ENCODE measurements at regions of chr6 and their contacts with region 1.

Region 1: GRCh38 chr6:153032255-153032882 is 29.9 kb upstream of the MTRF1L start:
- DNase-seq: no peak
- ATAC-seq: peak; percentile 52
- H3K4me3 ChIP-seq: no peak overlapping the region
- H3K27ac ChIP-seq: no peak overlapping the region
- H3K4me1 ChIP-seq: no peaks in the 10 kb centered on the region
- H3K27me3 ChIP-seq: no peaks in the 10 kb centered on the region

Region 2: GRCh38 chr6:152846825-152847224 is 185.5 kb before region 1 on chr6:
- intact Hi-C with region 1: no loop called
- DNase-seq: no peak
- ATAC-seq: no peak
- H3K4me3 ChIP-seq: no peak overlapping the region
- H3K27ac ChIP-seq: no peak overlapping the region
- H3K4me1 ChIP-seq: no peaks in the 10 kb centered on the region
- H3K27me3 ChIP-seq: no peaks in the 10 kb centered on the region

Region 3: DNA sequence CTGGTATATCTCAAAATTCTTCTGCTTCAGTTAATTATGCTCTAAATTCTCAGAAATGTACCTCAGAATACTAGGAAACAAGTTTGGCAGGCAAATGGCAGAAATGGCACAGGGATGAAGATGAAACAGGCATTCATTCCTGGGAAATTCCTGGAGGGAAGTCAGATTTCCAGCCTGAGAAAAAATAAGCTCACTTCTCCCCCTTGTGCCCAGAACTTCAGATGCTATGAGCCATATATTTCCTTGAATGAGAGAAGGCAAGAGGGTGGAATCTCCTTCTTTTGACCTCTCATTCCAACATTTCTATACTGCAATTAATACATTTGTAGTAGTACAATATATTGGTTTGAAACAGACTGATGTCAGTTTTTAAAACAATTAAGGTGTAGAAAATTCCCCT is 75.9 kb after region 1 on chr6:
- intact Hi-C with region 1: loop called in 1 of 2 experiments (anchors 1 kb)
- DNase-seq: no peak
- ATAC-seq: no peak
- H3K4me3 ChIP-seq: no peak overlapping the region
- H3K27ac ChIP-seq: no peak overlapping the region
- H3K4me1 ChIP-seq: peaks cover 0 to 14% of the 10 kb centered on the region in 2 donors
- H3K27me3 ChIP-seq: no peaks in the 10 kb centered on the region

Region 4: GRCh38 chr6:153328169-153328568 is 295.8 kb after region 1 on chr6:
- intact Hi-C with region 1: no loop called
- DNase-seq: no peak
- ATAC-seq: no peak
- H3K4me3 ChIP-seq: no peak overlapping the region
- H3K27ac ChIP-seq: no peak overlapping the region
- H3K4me1 ChIP-seq: no peaks in the 10 kb centered on the region
- H3K27me3 ChIP-seq: no peaks in the 10 kb centered on the region

Region 5: DNA sequence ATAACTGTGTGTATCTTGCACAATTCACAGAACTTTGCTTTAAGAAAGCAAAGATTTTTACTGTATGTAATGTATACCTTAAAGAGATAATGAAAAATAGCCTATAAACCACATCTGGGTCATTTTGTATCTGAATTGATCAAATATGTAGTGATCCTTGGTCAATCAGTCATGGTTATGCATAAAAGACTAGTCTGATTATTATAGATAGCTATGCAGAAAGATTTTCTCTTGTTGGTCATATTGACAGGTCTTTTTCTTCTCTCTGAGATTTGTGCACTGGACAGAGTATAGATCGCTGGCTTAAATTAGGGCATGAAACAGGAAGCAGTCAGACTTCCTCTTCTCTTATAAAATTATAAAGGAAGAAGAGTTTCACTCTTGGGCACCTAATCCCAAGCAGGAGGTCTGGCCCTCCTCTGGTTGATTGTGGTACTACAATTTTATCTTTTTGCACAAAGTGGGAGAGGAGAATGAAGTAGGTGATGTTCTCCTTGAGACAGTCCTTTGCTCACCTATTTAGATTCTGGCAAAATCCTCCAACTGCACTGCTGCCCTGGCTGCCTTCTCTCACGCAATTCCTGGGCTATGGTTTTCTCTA is 479.6 kb after region 1 on chr6:
- intact Hi-C with region 1: loop called in 1 of 2 experiments (anchors 5 kb)
- DNase-seq: no peak
- ATAC-seq: no peak
- H3K4me3 ChIP-seq: no peak overlapping the region
- H3K27ac ChIP-seq: no peak overlapping the region
- H3K4me1 ChIP-seq: no peaks in the 10 kb centered on the region
- H3K27me3 ChIP-seq: no peaks in the 10 kb centered on the region

Region 6: DNA sequence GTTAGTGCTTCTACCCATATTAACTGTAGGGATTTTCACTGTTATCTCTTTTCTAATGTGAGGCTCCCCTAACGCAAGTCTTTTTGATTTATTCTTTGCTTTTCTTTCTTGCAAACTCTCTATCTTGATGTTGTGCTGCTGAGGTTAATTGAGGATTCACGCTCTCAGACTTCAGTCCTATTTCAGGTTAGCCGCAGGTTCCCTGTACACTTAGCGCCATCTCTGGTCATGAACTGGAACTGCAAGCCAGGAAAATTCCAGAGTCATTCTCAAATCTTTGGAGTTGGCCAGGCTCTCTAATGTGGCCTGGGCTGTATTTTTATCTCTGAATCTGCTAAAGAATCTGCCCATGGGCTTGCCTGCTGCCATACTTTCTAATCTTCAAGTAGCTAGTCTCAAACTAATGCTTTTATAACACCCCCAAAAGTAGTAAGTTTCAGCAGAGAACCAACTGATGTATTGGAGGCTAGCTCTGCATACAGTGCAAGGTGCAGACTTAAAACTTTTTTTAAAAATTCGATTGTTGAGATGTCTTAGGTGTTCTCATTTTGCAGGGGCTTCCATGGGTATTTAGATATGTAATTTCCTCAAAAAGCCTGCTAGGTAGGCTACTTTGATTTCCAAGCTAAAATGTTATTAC is 915.6 kb after region 1 on chr6:
- intact Hi-C with region 1: loop called (anchors 10 kb)
- DNase-seq: no peak
- ATAC-seq: peak; percentile 76
- H3K4me3 ChIP-seq: peak overlapping the region in 1 of 2 donors; percentile 54
- H3K27ac ChIP-seq: no peak overlapping the region
- H3K4me1 ChIP-seq: no peaks in the 10 kb centered on the region
- H3K27me3 ChIP-seq: no peaks in the 10 kb centered on the region

Region 7: GRCh38 chr6:153957394-153957793 is 925.0 kb after region 1 on chr6:
- intact Hi-C with region 1: loop called in 1 of 2 experiments (anchors 10 kb)
- DNase-seq: no peak
- ATAC-seq: no peak
- H3K4me3 ChIP-seq: no peak overlapping the region
- H3K27ac ChIP-seq: no peak overlapping the region
- H3K4me1 ChIP-seq: no peaks in the 10 kb centered on the region
- H3K27me3 ChIP-seq: no peaks in the 10 kb centered on the region